Activated T-helper 1 cell treated with anti-CD3 and anti-CD28 coated beads, Interleukin-12 subunit alpha, Interleukin-12 subunit beta, Interleukin-2, Interleukin-4 antibody, amounts not matched to agents 30 ng/mL and 10 ng/mL and 1 ng/mL, durations not matched to agents 14 hours and 24 hours and 36 hours (primary cell): ENCODE measurements at regions of chr11 and their contacts with region 1.

Region 1: DNA sequence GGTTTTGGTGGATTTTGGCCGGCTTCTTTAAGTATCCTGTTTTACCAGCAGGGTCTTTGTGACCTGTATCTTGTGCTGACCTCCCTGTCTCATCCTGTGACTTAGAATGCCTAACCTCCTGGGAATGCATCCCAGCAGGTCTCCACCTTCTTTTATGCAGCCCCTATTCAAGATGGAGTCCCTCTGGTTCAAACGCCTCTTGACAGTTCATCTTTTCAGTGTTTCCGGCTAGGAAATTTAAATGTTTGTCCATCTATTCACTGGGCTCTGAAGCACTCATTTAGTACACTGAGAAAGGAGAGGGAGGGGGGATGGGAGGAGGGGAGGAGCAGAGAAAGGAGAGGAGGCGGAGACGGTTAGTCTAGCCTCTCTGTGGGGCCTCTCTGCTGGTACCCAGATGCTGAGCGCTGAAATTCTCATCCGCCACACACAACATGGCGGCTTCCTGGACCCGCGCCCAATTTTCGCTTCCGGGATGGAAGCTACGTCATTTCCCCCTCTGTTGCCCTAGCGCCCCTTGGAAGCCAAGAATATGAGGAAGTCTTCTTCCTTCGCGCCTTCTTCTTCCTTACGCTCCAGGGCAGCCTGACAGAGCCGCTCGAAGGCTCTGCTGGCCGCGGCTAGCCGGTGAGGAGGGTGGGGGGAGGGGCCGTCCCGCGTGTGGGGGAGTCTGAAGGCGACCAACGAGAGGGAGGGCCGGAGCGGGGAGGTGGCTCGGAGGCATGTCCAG is 69.0 kb upstream of the SYT13 start:
- DNase-seq: peak; percentile 75
- H3K4me3 Mint-ChIP-seq: peak overlapping the region; percentile 70
- H3K27ac Mint-ChIP-seq: peak overlapping the region; percentile 69
- H3K4me1 Mint-ChIP-seq: peaks cover 11% of the 10 kb centered on the region
- H3K27me3 Mint-ChIP-seq: peaks cover 9% of the 10 kb centered on the region

Region 2: GRCh38 chr11:45147017-45147728 is 208.0 kb before region 1 on chr11:
- intact Hi-C with region 1: loop called (anchors 1 kb)
- DNase-seq: peak; percentile 91
- H3K4me3 Mint-ChIP-seq: peak overlapping the region; percentile 81
- H3K27ac Mint-ChIP-seq: peak overlapping the region; percentile 83
- H3K4me1 Mint-ChIP-seq: peaks cover 13% of the 10 kb centered on the region
- H3K27me3 Mint-ChIP-seq: peaks cover 35% of the 10 kb centered on the region

Region 3: DNA sequence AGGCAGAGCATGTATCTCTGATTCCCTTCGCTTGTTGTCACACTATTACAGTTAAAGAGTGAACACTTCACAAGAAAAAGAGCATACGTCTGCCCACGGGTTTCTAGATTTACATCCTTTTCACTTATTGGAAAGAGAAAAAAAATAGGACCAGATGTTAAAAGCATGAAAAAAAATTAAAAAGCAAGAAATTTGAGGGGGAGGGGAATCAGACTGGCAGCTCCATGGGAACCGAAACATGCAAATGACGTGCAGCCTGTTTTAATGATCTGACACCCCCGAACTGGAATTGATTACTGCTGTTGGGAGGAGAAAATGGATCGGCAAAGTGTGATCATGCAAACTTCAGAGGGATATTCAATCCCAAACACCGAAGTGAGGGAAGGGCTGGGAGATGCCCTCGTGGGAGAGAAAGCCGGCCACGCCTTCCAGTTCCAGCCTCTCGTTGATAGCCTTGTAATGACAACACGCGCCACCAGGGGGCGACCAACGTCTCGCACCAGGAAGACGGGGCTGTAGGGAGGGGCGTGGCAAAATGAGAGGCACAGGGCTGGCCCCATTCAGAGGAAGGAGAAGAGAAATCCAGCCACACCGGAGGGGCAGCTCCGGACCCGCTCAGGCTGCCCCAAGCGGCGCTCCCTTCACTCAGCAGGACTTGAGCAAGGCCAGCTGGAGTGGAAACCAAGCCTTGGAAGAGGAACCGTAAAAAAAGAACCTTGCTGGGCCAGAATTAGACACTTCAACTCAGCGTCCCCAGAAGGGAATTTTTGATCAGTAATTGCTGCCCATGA is 15.2 kb before region 1 on chr11:
- intact Hi-C with region 1: loop called (anchors 1 kb)
- DNase-seq: peak; percentile 82
- H3K4me3 Mint-ChIP-seq: peak overlapping the region; percentile 30
- H3K27ac Mint-ChIP-seq: no peak overlapping the region
- H3K4me1 Mint-ChIP-seq: peaks cover 19% of the 10 kb centered on the region
- H3K27me3 Mint-ChIP-seq: peaks cover 23% of the 10 kb centered on the region

Region 4: DNA sequence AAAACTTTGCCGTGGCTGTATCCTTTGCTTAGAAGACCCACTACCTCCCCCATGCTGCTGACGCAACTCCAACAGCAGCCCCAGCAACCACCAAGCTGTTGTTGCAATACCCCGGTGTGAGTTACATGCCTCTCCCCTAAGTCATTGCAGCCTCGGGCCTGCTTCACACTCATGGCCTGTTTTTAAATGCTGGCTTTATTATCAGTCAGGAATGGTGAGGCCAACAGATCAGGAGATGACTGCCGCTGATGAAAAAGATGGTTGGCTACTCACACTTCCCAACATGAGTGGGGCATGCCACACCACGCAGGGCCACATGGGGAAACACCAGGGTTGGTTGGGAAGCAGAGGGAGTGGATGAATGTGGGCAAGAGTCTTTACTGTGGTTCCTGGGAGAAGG is 102.5 kb after region 1 on chr11:
- intact Hi-C with region 1: no loop called
- DNase-seq: no peak
- H3K4me3 Mint-ChIP-seq: no peak overlapping the region
- H3K27ac Mint-ChIP-seq: no peak overlapping the region
- H3K4me1 Mint-ChIP-seq: no peaks in the 10 kb centered on the region
- H3K27me3 Mint-ChIP-seq: no peaks in the 10 kb centered on the region